Ovary (tissue), 10 donors: ENCODE measurements at regions of chr17 and their contacts with region 1.

Region 1: DNA sequence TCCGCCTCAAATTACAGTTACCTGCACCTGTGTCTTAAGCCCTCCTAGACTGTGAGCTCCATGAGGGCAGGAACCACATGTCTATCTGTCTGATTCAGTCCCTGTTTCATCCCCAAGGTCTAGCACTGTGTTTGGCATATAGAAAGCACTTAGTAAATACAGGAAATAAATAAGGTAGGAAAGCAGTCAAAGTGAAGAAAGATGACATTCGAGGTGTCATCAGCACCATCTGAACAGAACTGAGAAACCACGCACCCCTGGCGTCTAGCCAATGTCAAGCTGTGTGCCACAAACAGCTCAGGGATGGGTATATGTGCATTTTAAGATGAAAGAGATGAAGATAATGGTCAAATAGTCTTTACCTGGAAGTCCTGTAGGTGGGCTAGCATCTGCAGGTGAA is 79.6 kb upstream of the ATP2A3 start:
- DNase-seq: no peak
- H3K4me3 ChIP-seq: no peak overlapping the region
- H3K27ac ChIP-seq: no peak overlapping the region
- H3K4me1 ChIP-seq: no peaks in the 10 kb centered on the region
- H3K27me3 ChIP-seq: no peaks in the 10 kb centered on the region
- CTCF ChIP-seq: no peak
- EP300 ChIP-seq: no peak
- POLR2A ChIP-seq: no peak

Region 2: GRCh38 chr17:4100883-4101756 is 57.3 kb after region 1 on chr17:
- intact Hi-C with region 1: loop called in 1 of 4 experiments (anchors 10 kb)
- DNase-seq: no peak
- H3K4me3 ChIP-seq: no peak overlapping the region
- H3K27ac ChIP-seq: no peak overlapping the region
- H3K4me1 ChIP-seq: no peaks in the 10 kb centered on the region
- H3K27me3 ChIP-seq: no peaks in the 10 kb centered on the region
- CTCF ChIP-seq: no peak
- EP300 ChIP-seq: no peak
- POLR2A ChIP-seq: no peak